ENCODE measurements at regions of chr4 and their contacts with region 1.

Region 1: DNA sequence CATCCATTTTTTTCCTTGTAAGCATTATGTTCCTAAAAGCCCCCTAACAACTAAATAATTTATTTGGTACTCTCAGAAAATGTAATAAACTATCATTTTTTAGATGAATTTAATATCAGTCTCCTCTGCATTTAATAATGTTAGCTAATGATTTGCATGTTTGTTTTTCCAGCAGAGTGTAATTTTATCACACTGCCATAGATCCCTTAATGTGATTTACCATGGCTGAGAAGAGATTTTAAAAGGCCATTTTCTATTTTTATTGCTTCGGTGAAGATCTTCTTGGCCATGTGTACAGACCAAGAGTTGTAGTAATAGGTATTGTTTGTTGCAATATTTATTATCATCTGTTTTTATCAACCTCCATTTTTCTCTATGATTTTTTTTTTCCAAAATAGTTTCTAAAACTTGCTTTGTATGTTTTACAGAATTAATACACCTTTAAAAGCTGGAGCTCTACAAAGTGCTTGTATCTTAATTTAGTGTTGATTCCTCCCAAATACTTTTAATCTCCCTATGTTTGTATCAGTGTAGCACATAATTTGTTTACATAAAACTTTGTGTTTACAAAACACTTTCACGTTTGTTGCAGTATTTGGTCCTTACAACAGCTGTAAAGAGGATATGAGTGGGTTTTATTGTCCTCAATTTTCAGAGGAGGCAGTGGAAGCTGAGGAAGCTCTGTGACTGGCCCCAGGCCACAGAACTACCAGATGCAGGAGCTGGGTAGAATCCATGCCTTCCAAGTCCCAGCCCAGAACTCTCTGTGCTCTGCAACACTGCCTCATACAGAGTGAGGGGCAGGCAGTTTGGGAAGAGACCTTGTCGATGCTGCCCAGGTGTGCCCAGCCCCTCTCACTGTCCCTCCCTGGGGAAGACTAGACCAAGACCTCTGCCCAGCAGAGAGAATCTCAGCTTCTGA is 58.1 kb downstream of the FAM114A1 start:
- DNase-seq: no peak
- ATAC-seq: no peak
- H3K4me3 ChIP-seq: no peak overlapping the region
- H3K27ac ChIP-seq: no peak overlapping the region
- H3K4me1 ChIP-seq: peaks cover 0 to 3% (median 0%) of the 10 kb centered on the region in 4 donors
- H3K27me3 ChIP-seq: no peaks in the 10 kb centered on the region
- CTCF ChIP-seq: no peak
- POLR2A ChIP-seq: no peak

Region 2: DNA sequence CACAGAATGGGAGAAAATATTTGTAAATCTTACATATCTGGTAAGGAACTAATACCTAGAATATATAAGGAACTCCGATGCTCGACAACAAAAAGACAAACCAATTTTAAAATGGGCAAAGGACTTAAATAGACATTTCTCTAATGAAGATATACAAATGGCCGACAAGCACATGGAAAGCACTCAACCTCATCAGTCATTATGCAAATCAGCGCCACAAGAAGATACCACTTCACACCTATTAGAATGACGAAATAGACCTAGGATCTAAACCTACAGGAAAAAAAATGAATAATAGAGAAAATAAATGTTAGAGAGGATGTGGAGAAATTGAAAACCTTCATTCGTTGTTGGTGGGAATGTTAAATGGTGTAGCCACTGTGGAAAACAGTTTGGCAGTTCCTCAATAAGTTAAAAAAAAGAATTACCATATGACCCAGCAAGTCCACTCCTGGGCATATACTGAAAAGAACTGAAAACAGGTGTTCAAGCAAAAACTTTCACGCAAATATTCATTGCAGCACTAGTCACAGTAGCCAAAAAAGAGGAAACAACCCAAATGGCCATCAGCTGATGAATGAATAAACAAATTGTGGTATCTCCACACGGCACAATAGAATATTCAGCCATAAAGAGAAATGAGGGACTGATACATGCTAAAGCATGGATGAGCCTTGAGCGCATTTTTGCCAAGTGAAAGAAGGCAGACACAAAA is 199.3 kb after region 1 on chr4:
- intact Hi-C with region 1: loop called in 1 of 2 experiments (anchors 10 kb)
- DNase-seq: no peak
- ATAC-seq: no peak
- H3K4me3 ChIP-seq: no peak overlapping the region
- H3K27ac ChIP-seq: no peak overlapping the region
- H3K4me1 ChIP-seq: no peaks in the 10 kb centered on the region
- H3K27me3 ChIP-seq: no peaks in the 10 kb centered on the region
- CTCF ChIP-seq: no peak
- POLR2A ChIP-seq: no peak

Region 3: GRCh38 chr4:39201963-39202362 is 276.2 kb after region 1 on chr4:
- intact Hi-C with region 1: no loop called
- DNase-seq: no peak
- ATAC-seq: no peak
- H3K4me3 ChIP-seq: no peak overlapping the region
- H3K27ac ChIP-seq: no peak overlapping the region
- H3K4me1 ChIP-seq: peaks cover 0 to 8% (median 3%) of the 10 kb centered on the region in 4 donors
- H3K27me3 ChIP-seq: no peaks in the 10 kb centered on the region
- CTCF ChIP-seq: no peak
- POLR2A ChIP-seq: no peak

Measured in right lobe of liver (tissue), 6 donors.